ENCODE measurements at regions of chr1 and their contacts with region 1.

Region 1: GRCh38 chr1:175023043-175023921 is at the start of gene MRPS14:
- DNase-seq: peak; percentile 96 to 99 (median 98)
- ATAC-seq: peak; percentile 90
- H3K4me3 ChIP-seq: peak within 1 kb of the TSS; percentile 97
- H3K4me3 Mint-ChIP-seq: peak within 1 kb of the TSS; percentile 88
- H3K27ac ChIP-seq: peak within 1 kb of the TSS; percentile 84 to 91
- H3K27ac Mint-ChIP-seq: peak within 1 kb of the TSS; percentile 94
- H3K4me1 ChIP-seq: peaks cover 19% of the 10 kb centered on the region
- H3K4me1 Mint-ChIP-seq: peaks cover 34% of the 10 kb centered on the region
- H3K27me3 ChIP-seq: no peaks in the 10 kb centered on the region
- H3K27me3 Mint-ChIP-seq: no peaks in the 10 kb centered on the region
- CTCF ChIP-seq: no peak
- total RNA-seq, gene MRPS14: 8.5 to 9.6 TPM

Region 2: DNA sequence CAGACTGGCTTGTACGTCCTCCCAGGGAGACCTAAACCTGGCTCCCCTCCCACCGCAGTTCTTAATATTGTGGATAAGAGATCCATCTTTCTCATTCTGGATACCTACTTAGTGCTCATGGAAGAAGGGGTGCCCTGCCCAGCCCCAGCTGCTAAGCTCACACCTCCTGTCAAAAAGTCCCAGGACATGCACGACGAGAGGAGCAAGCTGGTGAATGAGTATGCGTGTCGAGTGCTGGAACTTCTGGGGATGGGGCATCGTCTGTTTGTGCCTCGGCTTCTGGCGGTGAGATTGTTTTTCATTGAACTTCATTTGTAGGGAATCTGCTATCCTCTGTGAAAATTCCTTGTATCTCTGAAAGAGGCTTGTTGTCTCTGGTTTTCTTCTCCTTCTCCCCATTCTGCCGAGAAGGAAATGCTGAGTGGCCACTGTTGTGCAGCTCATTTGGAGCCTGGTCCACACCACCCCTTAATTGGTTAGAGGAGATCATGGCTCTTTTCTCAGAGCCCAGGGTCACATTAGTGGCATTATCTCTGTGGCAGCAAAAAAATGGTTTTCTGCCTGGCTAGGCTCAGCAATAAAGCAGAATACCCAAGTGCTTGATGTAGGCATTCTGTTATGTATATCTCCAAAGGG is 222.9 kb before region 1 on chr1:
- CTCF ChIA-PET with region 1: interaction called, 4 read pairs
- POLR2A ChIA-PET with region 1: interaction called, 16 read pairs
- intact Hi-C with region 1: no loop called
- DNase-seq: peak in 9 of 14 experiments; percentile 4 to 48 (median 10)
- ATAC-seq: no peak
- H3K4me3 ChIP-seq: peak overlapping the region; percentile 79
- H3K4me3 Mint-ChIP-seq: no peak overlapping the region
- H3K27ac ChIP-seq: peak overlapping the region; percentile 34 to 57
- H3K27ac Mint-ChIP-seq: no peak overlapping the region
- H3K4me1 ChIP-seq: peaks cover 12% of the 10 kb centered on the region
- H3K4me1 Mint-ChIP-seq: no peaks in the 10 kb centered on the region
- H3K27me3 ChIP-seq: no peaks in the 10 kb centered on the region
- H3K27me3 Mint-ChIP-seq: no peaks in the 10 kb centered on the region
- CTCF ChIP-seq: no peak

Region 3: GRCh38 chr1:175005085-175005783 is 18.0 kb before region 1 on chr1:
- CTCF ChIA-PET with region 1: interaction called, 30 read pairs
- POLR2A ChIA-PET with region 1: interaction called, 268 read pairs
- intact Hi-C with region 1: loop called in 1 of 2 experiments (anchors 1 kb)
- DNase-seq: no peak
- ATAC-seq: no peak
- H3K4me3 ChIP-seq: no peak overlapping the region
- H3K4me3 Mint-ChIP-seq: no peak overlapping the region
- H3K27ac ChIP-seq: no peak overlapping the region
- H3K27ac Mint-ChIP-seq: peak overlapping the region; percentile 34
- H3K4me1 ChIP-seq: peaks cover 13% of the 10 kb centered on the region
- H3K4me1 Mint-ChIP-seq: peaks cover 62% of the 10 kb centered on the region
- H3K27me3 ChIP-seq: no peaks in the 10 kb centered on the region
- H3K27me3 Mint-ChIP-seq: no peaks in the 10 kb centered on the region
- CTCF ChIP-seq: no peak

Region 4: GRCh38 chr1:175124861-175125260 is 101.6 kb after region 1 on chr1:
- CTCF ChIA-PET with region 1: interaction called, 20 read pairs
- POLR2A ChIA-PET with region 1: no interaction called
- intact Hi-C with region 1: no loop called
- DNase-seq: no peak
- ATAC-seq: no peak
- H3K4me3 ChIP-seq: no peak overlapping the region
- H3K4me3 Mint-ChIP-seq: no peak overlapping the region
- H3K27ac ChIP-seq: no peak overlapping the region
- H3K27ac Mint-ChIP-seq: no peak overlapping the region
- H3K4me1 ChIP-seq: peaks cover 2% of the 10 kb centered on the region
- H3K4me1 Mint-ChIP-seq: no peaks in the 10 kb centered on the region
- H3K27me3 ChIP-seq: no peaks in the 10 kb centered on the region
- H3K27me3 Mint-ChIP-seq: no peaks in the 10 kb centered on the region
- CTCF ChIP-seq: no peak

Region 5: GRCh38 chr1:176206961-176207902 is 1184.0 kb after region 1 on chr1 and contains the start of gene COP1:
- CTCF ChIA-PET with region 1: no interaction called
- POLR2A ChIA-PET with region 1: no interaction called
- intact Hi-C with region 1: loop called in 1 of 2 experiments (anchors 10 kb)
- DNase-seq: peak; percentile 94 to 99 (median 96)
- ATAC-seq: peak; percentile 77
- H3K4me3 ChIP-seq: peak within 1 kb of the TSS; percentile 98
- H3K4me3 Mint-ChIP-seq: peak within 1 kb of the TSS; percentile 100
- H3K27ac ChIP-seq: peak within 1 kb of the TSS; percentile 87 to 95
- H3K27ac Mint-ChIP-seq: peak within 1 kb of the TSS; percentile 99
- H3K4me1 ChIP-seq: peaks cover 19% of the 10 kb centered on the region
- H3K4me1 Mint-ChIP-seq: peaks cover 45% of the 10 kb centered on the region
- H3K27me3 ChIP-seq: no peaks in the 10 kb centered on the region
- H3K27me3 Mint-ChIP-seq: peaks cover 3% of the 10 kb centered on the region
- CTCF ChIP-seq: no peak
- total RNA-seq, gene COP1: 38.6 to 42.2 TPM

Measured in CD4-positive, alpha-beta T cell (primary cell).